SK-MEL-5 (cell line): ENCODE measurements at regions of chr1 and their contacts with region 1.

Region 1: DNA sequence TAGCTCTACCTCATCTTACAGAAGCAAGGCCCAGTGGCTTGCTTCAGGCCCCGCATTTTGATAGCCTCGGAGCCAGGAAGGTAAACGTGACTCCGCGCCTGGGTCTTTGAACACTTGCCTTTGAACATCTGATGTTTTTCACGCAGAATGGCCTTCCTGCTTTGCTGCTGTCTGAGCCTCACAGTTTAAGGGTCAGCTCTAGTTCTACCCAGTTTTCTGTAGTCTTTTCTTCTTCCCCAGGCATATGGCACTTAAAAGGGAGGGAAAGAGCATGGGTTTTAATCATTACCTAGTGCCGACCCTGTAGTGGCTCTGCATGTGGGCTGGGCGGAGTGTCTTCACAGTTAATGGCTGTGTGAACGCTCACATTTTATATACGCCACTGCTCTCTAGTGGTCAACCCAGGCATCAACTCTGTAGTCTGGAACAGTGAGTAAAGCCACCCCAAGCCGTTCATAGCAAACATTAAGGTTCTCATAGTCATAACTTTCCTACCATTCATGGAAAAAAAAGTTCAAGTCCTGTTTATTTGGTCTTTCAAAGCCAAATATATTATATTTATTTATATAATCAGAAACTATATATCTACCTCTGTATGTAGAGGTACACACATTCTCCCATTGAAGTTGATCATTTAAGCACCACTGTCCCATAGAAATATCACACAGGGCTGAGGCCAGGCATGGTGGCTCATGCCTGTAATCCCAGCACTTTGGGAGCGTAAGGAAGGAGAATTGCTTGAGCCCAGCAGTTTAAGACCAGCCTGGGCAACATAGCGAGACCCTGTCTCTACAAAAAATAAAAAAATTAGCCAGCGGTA is 78.1 kb downstream of the IER5 start:
- DNase-seq: peak; percentile 88

Region 2: DNA sequence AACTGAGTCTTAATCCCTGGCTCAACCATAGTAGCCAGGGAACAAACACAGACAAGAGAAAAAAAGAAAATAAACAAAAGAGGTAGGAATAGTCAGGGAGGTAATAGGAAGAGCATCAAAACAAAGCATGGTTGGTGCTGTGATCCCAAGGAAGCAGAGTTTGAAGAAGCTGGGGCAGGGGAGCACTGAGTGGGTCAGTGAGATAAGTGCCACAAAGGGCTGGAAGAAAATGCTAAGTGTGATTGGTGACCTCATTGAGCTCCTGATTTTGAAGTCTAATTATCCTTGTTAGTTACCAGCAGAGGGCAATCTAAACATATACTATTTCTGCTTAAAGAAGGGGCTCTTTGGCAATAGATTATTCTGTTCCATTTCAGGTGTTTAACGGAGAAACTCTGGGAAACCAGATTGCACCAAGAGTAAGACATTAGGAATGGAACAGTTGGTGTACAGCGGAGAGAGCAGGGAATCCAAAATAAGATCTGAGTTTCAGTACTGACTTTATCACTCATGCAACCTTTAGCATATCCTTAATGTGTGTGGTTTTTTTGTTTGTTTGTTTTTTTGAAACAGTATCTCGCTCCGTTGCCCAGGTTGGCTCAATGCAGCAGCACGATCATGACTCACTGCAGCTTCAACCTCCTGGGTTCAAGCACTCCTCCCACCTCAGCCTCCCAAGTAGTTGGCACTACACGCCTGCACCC is 284.6 kb before region 1 on chr1:
- in situ Hi-C with region 1: loop called (anchors 10 kb)
- DNase-seq: peak; percentile 65